HEK293 (cell line): ENCODE measurements at regions of chr7 and their contacts with region 1.

Region 1: DNA sequence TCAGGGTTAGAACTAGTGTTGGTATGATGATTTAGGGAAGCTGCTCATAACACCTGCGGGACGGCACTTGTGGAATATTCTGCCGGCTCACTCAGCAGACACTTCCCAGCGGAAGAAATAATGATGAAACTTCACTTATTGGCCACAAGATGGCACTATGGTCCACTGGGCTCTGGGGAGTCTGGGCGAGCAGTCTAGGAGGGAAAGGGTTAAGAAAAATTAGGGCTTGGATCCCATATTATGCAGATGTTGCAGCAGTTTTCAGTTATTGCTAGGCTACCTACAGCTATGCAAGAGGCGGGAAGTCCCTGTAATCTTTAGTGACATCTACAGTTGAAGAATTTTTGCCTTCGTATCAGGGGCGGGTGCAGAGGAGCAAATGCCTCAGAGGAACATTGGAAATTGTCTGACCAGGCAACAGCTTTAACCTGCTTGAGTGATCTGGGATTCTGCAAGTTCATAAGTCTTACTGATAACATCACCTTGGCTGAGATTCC is 238.7 kb upstream of the PRSS58 start:
- H3K4me3 ChIP-seq: no peak overlapping the region
- H3K27ac ChIP-seq: no peak overlapping the region
- H3K4me1 ChIP-seq: peaks cover 4% of the 10 kb centered on the region
- CTCF ChIP-seq: no peak

Region 2: GRCh38 chr7:141748401-141748800 is 748.2 kb before region 1 on chr7:
- CTCF ChIA-PET with region 1: no interaction called
- POLR2A ChIA-PET with region 1: no interaction called
- H3K4me3 ChIP-seq: no peak overlapping the region
- H3K27ac ChIP-seq: no peak overlapping the region
- H3K4me1 ChIP-seq: no peaks in the 10 kb centered on the region
- CTCF ChIP-seq: no peak

Region 3: DNA sequence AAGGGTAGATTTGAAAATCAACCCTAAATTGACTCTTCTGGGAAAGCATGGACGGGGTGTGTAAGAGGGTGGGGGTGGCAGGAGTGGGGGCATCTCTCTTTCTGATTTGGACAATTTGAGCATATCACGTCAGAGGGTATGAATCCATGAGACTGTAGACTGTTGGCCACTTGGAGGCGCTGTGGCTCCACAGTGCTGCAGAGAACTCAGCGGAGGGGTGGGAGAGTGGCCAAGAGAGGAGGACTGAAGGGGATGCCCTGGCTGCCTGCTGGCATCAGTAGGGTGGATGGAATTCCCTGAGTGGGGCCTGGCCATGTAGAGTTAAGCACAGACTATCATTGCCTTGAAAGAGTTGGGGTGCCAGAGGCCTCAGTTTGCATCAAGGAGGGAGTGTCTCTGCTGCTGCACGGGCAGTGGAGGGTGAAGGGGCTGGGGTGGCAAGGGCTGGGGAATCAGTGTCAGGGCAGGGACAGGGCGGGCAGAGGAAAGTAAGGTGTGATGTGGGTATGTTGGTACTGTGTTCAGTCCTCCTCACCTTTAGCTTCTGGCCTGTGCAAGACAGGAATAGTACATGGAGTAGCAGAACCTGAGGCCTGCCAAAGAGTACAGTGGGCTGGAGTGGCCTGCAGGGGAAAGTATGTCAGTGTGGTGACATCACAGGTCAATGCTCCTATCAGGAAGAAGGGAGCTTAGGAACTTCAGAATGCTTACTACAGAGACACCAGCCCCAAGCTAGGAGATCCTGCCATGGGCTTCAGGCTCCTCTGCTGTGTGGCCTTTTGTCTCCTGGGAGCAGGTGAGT is 105.2 kb before region 1 on chr7:
- CTCF ChIA-PET with region 1: interaction called, 10 read pairs
- POLR2A ChIA-PET with region 1: no interaction called
- H3K4me3 ChIP-seq: no peak overlapping the region
- H3K27ac ChIP-seq: no peak overlapping the region
- H3K4me1 ChIP-seq: no peaks in the 10 kb centered on the region
- CTCF ChIP-seq: no peak

Region 4: GRCh38 chr7:142478479-142479072 is 18.0 kb before region 1 on chr7:
- CTCF ChIA-PET with region 1: interaction called, 99 read pairs
- POLR2A ChIA-PET with region 1: no interaction called
- H3K4me3 ChIP-seq: no peak overlapping the region
- H3K27ac ChIP-seq: no peak overlapping the region
- H3K4me1 ChIP-seq: no peaks in the 10 kb centered on the region
- CTCF ChIP-seq: no peak

Region 5: GRCh38 chr7:142516038-142516501 is 19.5 kb after region 1 on chr7:
- CTCF ChIA-PET with region 1: interaction called, 22 read pairs
- POLR2A ChIA-PET with region 1: no interaction called
- H3K4me3 ChIP-seq: no peak overlapping the region
- H3K27ac ChIP-seq: no peak overlapping the region
- H3K4me1 ChIP-seq: no peaks in the 10 kb centered on the region
- CTCF ChIP-seq: peak; percentile 43; the same call in 1 of the 2 replicates

Region 6: DNA sequence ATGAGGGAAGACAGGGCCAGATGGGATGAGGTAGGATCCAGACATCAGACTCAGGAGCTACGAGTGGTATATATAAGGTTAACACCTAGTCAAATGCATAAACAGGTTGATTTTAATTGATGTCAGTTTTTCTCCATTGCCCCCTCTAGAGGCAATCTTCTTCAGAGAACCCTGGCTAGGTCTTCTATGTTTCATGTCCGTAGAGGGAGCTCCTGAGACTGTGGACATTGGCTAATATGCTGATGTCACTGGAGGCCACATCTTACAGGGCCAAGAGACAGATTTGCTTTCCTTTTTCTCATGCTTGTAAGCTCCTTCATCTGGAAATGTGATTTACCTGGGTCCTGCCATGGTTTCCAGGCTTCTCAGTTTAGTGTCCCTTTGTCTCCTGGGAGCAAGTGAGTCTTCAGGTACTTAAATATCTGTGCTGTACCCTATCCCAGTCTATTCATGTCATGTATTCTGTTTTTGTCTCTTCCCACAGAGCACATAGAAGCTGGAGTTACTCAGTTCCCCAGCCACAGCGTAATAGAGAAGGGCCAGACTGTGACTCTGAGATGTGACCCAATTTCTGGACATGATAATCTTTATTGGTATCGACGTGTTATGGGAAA is 91.1 kb after region 1 on chr7:
- CTCF ChIA-PET with region 1: interaction called, 16 read pairs
- POLR2A ChIA-PET with region 1: no interaction called
- H3K4me3 ChIP-seq: no peak overlapping the region
- H3K27ac ChIP-seq: no peak overlapping the region
- H3K4me1 ChIP-seq: no peaks in the 10 kb centered on the region
- CTCF ChIP-seq: peak; percentile 47; the same call in 1 of the 2 replicates

Region 7: DNA sequence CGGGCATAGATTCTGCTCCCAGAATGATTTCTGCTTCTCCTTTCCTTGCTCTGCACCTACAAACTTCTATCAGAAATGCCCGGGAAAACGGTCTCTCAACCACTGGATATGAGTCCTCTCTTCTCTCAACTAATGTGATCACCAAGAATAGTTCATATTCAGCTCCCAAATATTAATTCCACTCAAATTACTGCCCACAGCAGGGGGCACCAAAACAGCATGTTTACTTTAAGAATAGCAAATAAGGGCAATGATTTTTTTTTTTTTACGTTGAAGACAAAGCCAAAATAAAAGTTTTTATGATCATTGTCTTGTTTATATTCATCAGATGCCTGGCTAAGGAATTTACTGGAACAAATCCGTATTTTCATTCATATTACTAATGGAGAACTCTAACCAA is 157.8 kb after region 1 on chr7:
- CTCF ChIA-PET with region 1: no interaction called
- POLR2A ChIA-PET with region 1: no interaction called
- H3K4me3 ChIP-seq: no peak overlapping the region
- H3K27ac ChIP-seq: no peak overlapping the region
- H3K4me1 ChIP-seq: no peaks in the 10 kb centered on the region
- CTCF ChIP-seq: no peak

Region 8: DNA sequence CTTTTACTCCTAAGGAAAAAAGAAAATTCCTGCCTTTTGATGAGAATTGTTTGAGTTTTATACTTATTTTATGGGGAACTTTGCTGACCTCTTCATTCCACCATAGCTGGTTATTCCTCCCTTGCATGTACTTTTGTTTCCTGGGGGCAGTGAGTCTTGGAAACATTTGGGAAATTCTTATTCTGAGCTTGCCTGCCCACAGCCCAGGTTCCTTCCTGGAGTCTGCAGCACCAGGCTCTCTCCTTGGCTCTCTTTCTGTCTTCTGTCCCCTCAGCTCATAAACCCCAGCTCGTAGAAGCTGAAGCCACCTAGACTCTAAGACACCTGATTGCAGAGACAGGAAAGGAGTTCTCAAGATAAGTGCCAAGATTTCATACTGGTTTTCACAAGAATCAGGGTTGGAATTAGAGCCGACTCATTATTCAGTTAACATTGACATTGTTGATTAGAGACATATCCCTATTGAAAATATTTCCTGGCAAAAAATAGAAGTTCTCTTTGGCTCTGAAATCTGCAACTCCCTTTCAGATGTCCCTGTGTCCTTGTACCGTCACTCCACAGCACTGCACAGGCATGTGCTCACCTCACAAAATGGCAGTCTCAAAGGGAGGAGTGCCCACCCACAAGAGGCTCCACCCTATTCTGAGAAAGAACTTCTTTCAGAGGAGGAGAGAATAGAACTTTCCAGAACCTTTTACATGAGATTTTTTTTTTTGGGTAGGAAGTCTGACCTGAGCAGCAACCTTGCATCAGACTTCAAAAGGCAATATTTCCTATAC is 184.9 kb after region 1 on chr7:
- CTCF ChIA-PET with region 1: no interaction called
- POLR2A ChIA-PET with region 1: no interaction called
- H3K4me3 ChIP-seq: no peak overlapping the region
- H3K27ac ChIP-seq: no peak overlapping the region
- H3K4me1 ChIP-seq: no peaks in the 10 kb centered on the region
- CTCF ChIP-seq: no peak

Region 9: DNA sequence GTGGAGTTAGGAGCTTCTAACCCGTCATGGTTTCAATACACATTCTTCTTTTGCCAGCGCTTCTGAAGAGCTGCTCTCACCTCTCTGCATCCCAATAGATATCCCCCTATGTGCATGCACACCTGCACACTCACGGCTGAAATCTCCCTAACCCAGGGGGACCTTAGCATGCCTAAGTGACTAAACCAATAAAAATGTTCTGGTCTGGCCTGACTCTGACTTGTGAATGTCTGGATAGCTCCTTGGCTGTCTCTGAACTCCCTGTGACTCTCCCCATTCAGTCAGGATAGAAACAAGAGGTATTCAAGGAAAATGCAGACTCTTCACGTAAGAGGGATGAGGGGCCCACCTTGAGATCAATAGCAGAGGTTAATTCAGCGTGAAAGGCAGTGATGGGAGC is 296.6 kb after region 1 on chr7:
- CTCF ChIA-PET with region 1: no interaction called
- POLR2A ChIA-PET with region 1: no interaction called
- H3K4me3 ChIP-seq: no peak overlapping the region
- H3K27ac ChIP-seq: no peak overlapping the region
- H3K4me1 ChIP-seq: no peaks in the 10 kb centered on the region
- CTCF ChIP-seq: no peak